ENCODE measurements at regions of chr11 and their contacts with region 1.

Region 1: GRCh38 chr11:6389921-6390724 is at the start of gene SMPD1:
- DNase-seq: peak; percentile 90 to 95
- ATAC-seq: peak; percentile 89 to 93
- H3K4me3 ChIP-seq: peak within 1 kb of the TSS; percentile 77 to 92 (median 86)
- H3K27ac ChIP-seq: peak within 1 kb of the TSS; percentile 90 to 97 (median 92)
- H3K4me1 ChIP-seq: peaks cover 16 to 17% of the 10 kb centered on the region in 2 donors
- H3K27me3 ChIP-seq: no peaks in the 10 kb centered on the region
- CTCF ChIP-seq: peak in 1 of 5 experiments; percentile 7
- POLR2A ChIP-seq: peak; percentile 89 to 92
- total RNA-seq, gene SMPD1: 19.2 to 56.1 (median 42.4) TPM

Region 2: DNA sequence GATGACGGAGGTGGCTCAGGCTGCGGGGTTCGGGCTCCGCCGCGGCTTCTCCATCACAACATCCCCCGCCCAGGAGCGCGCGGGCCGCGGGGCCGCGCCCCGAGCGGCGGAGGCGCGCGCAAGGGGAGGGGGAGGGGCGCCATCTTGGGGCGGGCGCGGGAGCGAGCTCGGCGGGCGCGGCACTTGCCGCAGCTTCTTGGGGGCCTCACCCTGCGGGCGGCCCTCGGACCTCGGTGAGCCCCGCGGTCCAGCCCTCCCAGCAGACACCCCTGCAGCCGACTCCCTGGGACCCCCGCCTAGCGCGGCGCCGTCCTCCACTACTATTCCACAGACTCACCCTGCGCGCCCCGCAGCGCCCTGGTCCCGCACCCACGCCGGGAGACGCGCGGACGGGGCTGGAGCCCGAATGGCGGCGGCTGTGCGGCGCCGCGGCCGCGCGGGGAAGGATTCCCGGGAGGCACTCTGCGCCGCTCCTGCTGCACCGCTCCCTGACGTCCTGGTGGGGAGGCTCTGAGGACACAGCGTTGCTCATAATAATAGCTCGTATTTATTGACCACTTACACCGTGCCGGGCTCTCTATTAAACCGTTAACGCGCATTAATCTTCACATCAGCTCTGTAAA is 29.0 kb after region 1 on chr11 and contains the start of gene APBB1:
- in situ Hi-C with region 1: no loop called
- intact Hi-C with region 1: loop called (anchors 1 kb)
- DNase-seq: peak; percentile 22 to 44
- ATAC-seq: peak; percentile 90 to 91
- H3K4me3 ChIP-seq: peak within 1 kb of the TSS; percentile 69 to 99 (median 92)
- H3K27ac ChIP-seq: peak within 1 kb of the TSS; percentile 78 to 92 (median 86)
- H3K4me1 ChIP-seq: peaks cover 14 to 15% of the 10 kb centered on the region in 2 donors
- H3K27me3 ChIP-seq: no peaks in the 10 kb centered on the region
- CTCF ChIP-seq: peak in 1 of 5 experiments; percentile 6
- POLR2A ChIP-seq: peak; percentile 42 to 48
- total RNA-seq, gene APBB1: 18.5 to 49.2 (median 46.2) TPM

Region 3: GRCh38 chr11:6481012-6481923 is 91.1 kb after region 1 on chr11 and contains the starts of genes ARFIP2 and TIMM10B:
- in situ Hi-C with region 1: no loop called
- intact Hi-C with region 1: loop called (anchors 1 kb)
- DNase-seq: peak; percentile 98 to 99
- ATAC-seq: peak; percentile 98 to 99
- H3K4me3 ChIP-seq: peak within 1 kb of the TSS; percentile 85 to 95 (median 87)
- H3K27ac ChIP-seq: peak within 1 kb of the TSS; percentile 93 to 97 (median 94)
- H3K4me1 ChIP-seq: peaks cover 24 to 31% of the 10 kb centered on the region in 2 donors
- H3K27me3 ChIP-seq: no peaks in the 10 kb centered on the region
- CTCF ChIP-seq: no peak
- POLR2A ChIP-seq: peak; percentile 93 to 97
- total RNA-seq, gene ARFIP2: 20.1 to 27.8 (median 24.4) TPM
- total RNA-seq, gene TIMM10B: 10.0 to 14.5 (median 12.4) TPM

Region 4: GRCh38 chr11:6603287-6604080 is 213.4 kb after region 1 on chr11 and contains the starts of genes ILK and RRP8:
- in situ Hi-C with region 1: no loop called
- intact Hi-C with region 1: loop called (anchors 5 kb)
- DNase-seq: peak; percentile 88 to 91
- ATAC-seq: peak; percentile 87 to 89
- H3K4me3 ChIP-seq: peak within 1 kb of the TSS; percentile 87 to 97 (median 90)
- H3K27ac ChIP-seq: peak within 1 kb of the TSS; percentile 93 to 97 (median 94)
- H3K4me1 ChIP-seq: peaks cover 52% of the 10 kb centered on the region in 2 donors
- H3K27me3 ChIP-seq: no peaks in the 10 kb centered on the region
- CTCF ChIP-seq: peak in 4 of 5 experiments; percentile 25 to 59 (median 32)
- POLR2A ChIP-seq: peak; percentile 87 to 91
- total RNA-seq, gene ILK: 48.3 to 113 (median 70.5) TPM
- total RNA-seq, gene RRP8: 10.9 to 25.7 (median 14.9) TPM

Region 5: GRCh38 chr11:6682936-6683861 is 293.1 kb after region 1 on chr11 and contains the start of gene MRPL17:
- in situ Hi-C with region 1: no loop called
- intact Hi-C with region 1: loop called (anchors 10 kb)
- DNase-seq: peak; percentile 98 to 99
- ATAC-seq: peak; percentile 99
- H3K4me3 ChIP-seq: peak within 1 kb of the TSS; percentile 81 to 98 (median 92)
- H3K27ac ChIP-seq: peak within 1 kb of the TSS; percentile 82 to 95 (median 87)
- H3K4me1 ChIP-seq: peaks cover 9 to 22% of the 10 kb centered on the region in 2 donors
- H3K27me3 ChIP-seq: no peaks in the 10 kb centered on the region
- CTCF ChIP-seq: peak; percentile 77 to 94 (median 92)
- POLR2A ChIP-seq: peak; percentile 75 to 78
- total RNA-seq, gene MRPL17: 25.1 to 33.4 (median 27.7) TPM